ENCODE measurements at regions of chr13 and their contacts with region 1.

Region 1: GRCh38 chr13:86572115-86572514 is 772.9 kb upstream of the SLITRK6 start:
- DNase-seq: peak; percentile 79
- ATAC-seq: peak; percentile 77
- H3K4me3 ChIP-seq: peak overlapping the region; percentile 6; the same call in 1 of the 2 replicates
- H3K27ac ChIP-seq: peak overlapping the region; percentile 95
- H3K4me1 ChIP-seq: peaks cover 38% of the 10 kb centered on the region
- H3K27me3 ChIP-seq: no peaks in the 10 kb centered on the region
- CTCF ChIP-seq: no peak

Region 2: DNA sequence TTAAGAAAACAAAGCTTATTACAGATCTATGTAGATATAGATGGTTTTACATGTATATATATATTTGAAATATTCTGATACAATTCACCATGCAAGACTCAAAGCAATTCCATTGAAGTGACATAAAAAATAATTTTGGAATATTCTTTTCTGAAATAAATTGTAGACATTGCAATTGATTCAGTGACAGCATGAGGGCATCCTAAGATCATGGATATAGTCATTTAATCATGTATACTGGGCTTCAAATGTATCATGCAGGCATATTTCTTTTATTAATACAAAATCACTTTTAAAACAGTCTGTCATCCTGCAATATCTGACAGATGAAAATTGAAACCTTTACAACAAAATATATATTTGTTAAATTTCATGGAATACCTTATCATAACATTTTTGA is 486.2 kb before region 1 on chr13:
- CTCF ChIA-PET with region 1: no interaction called
- POLR2A ChIA-PET with region 1: no interaction called
- intact Hi-C with region 1: loop called (anchors 10 kb)
- DNase-seq: peak; percentile 13
- ATAC-seq: no peak
- H3K4me3 ChIP-seq: no peak overlapping the region
- H3K27ac ChIP-seq: no peak overlapping the region
- H3K4me1 ChIP-seq: peaks cover 7% of the 10 kb centered on the region; the same call in 1 of the 2 replicates
- H3K27me3 ChIP-seq: no peaks in the 10 kb centered on the region
- CTCF ChIP-seq: peak; percentile 48; the same call in 1 of the 2 replicates

Measured in PC-3 (cell line).